Heart right ventricle (tissue), 16 donors: ENCODE measurements at regions of chr9 and their contacts with region 1.

Region 1: DNA sequence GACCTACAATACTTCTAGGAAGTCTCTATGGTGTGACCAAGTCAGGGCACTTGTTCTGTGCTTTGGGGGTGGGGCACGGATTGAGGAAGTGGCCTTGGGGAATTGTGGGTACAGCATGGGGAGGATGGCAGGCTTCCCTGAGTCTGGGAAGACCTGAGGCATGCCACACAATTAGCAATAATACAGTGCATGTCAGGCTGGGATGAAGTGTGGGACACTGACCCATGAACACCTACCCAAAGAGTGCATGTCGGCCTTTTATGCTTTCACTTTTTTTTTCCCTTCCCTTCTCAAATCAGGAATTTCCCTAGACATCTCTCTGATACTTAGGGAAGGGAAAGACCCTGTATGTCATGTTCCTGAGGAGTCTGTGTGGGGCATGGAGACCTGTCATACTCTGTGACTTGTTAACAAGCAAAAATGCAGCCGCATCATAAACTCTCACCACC is 146.4 kb downstream of the PALM2AKAP2 start:
- DNase-seq: no peak
- ATAC-seq: peak in 3 of 8 donors; percentile 24 to 31 (median 30)
- H3K4me3 ChIP-seq: no peak overlapping the region
- H3K27ac ChIP-seq: no peak overlapping the region
- H3K4me1 ChIP-seq: peaks cover 0 to 33% (median 24%) of the 10 kb centered on the region in 9 donors
- H3K27me3 ChIP-seq: no peaks in the 10 kb centered on the region
- CTCF ChIP-seq: no peak

Region 2: DNA sequence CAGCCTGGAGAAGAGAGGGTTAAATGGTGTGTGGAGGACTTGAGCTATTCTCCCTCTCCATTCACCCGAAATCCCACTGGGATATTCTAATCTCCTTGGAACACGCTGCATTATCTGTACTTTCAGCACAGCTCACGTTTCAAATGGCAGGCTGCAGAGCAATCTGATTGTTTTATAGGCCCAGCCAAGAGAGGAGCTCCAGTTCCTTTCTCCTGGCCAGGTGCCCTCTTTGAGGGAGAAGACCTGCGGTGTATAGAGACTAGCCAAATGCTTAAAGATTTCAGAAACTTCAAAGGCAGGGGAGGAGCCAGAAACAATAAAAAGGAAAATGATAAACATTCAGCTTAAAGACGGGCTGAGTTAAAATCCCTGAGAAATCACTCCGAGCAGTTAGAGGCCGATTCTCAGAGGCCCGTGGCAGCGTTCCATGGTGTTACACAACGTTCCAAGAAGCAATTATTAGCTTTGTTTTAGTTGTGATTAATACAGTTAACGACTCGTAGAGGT is 1872.8 kb before region 1 on chr9:
- intact Hi-C with region 1: loop called in 1 of 10 experiments (anchors 10 kb)
- DNase-seq: peak; percentile 54 to 61
- ATAC-seq: peak; percentile 51 to 78 (median 66)
- H3K4me3 ChIP-seq: peak overlapping the region in 3 of 10 donors; percentile 8 to 10 (median 8)
- H3K27ac ChIP-seq: peak overlapping the region in 7 of 10 donors; percentile 30 to 54 (median 46)
- H3K4me1 ChIP-seq: peaks cover 5 to 55% (median 15%) of the 10 kb centered on the region in 9 donors
- H3K27me3 ChIP-seq: peaks cover 0 to 6% (median 0%) of the 10 kb centered on the region in 7 donors
- CTCF ChIP-seq: no peak

Region 3: DNA sequence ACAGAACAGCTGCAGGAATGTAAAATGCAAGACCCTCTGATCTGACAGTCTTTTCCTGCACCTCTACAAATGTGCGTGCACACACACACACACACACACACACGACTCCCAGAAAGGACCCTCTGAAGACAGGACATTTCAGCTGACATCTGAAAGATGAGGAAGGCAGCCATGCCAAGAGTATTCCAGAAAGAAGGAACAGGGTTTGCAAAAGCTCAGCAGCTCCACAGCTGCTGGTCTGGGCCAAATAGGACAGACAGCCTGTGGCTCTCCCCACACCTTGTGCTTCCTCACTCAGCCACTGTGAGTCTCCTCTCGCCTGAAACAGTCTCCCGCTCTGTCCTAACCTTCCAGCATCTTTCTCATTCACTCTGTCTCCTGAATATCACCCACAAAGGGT is 42.6 kb after region 1 on chr9:
- intact Hi-C with region 1: loop called in 1 of 10 experiments (anchors 5 kb)
- DNase-seq: peak in 1 of 2 donors; percentile 38
- ATAC-seq: peak in 7 of 8 donors; percentile 39 to 87 (median 77)
- H3K4me3 ChIP-seq: no peak overlapping the region
- H3K27ac ChIP-seq: peak overlapping the region; percentile 2 to 79 (median 56)
- H3K4me1 ChIP-seq: peaks cover 3 to 65% (median 50%) of the 10 kb centered on the region in 9 donors
- H3K27me3 ChIP-seq: no peaks in the 10 kb centered on the region
- CTCF ChIP-seq: peak in 7 of 9 donors; percentile 6 to 53 (median 36)